H1 (cell line): ENCODE measurements at regions of chr10 and their contacts with region 1.

Region 1: GRCh38 chr10:29430101-29430500 is 141.2 kb downstream of the LYZL1 start:
- DNase-seq: no peak
- H3K4me3 ChIP-seq: no peak overlapping the region
- H3K27ac ChIP-seq: no peak overlapping the region
- H3K4me1 ChIP-seq: no peaks in the 10 kb centered on the region
- H3K27me3 ChIP-seq: no peaks in the 10 kb centered on the region
- CTCF ChIP-seq: no peak
- EP300 ChIP-seq: no peak
- POLR2A ChIP-seq: no peak
- RAD21 ChIP-seq: no peak

Region 2: DNA sequence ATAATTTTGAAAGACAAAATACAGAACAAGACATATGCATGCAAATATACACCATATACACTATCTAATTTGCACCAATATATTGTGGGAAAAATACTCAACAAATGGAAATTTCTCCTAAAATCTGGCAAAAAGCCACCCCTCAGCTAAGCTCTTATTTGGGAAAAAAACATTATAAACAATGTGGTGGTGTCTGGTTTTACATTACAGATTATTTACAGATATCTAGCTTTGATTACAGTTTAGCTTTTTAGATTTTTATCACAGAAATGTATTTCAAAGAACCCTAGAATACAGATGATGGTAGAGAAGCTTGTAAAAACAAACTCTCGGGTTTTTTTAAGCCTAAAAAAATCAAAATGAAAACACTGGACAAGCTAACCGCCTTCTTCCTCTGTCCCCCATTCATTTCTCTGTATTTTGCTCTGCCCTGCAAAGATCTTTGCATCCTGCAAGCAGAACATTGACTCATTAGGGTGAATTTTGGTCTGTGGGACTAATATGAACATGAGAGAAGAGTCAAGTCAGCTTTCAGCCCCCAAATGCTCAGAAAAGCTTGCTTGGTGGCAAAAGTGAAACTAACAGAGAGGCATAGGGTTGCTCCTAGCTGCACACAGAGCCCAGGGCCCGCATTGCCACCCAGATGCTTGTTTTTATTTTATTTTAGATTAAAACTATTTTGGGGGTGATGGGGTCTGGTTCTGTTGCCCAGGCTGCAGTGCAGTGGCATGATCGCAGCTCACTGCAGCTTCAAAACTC is 230.0 kb before region 1 on chr10:
- CTCF ChIA-PET with region 1: no interaction called
- POLR2A ChIA-PET with region 1: no interaction called
- DNase-seq: no peak
- H3K4me3 ChIP-seq: no peak overlapping the region
- H3K27ac ChIP-seq: no peak overlapping the region
- H3K4me1 ChIP-seq: peaks cover 3 to 9% (median 6%) of the 10 kb centered on the region in 4 experiments; a peak in 5 of 7 replicates
- H3K27me3 ChIP-seq: no peaks in the 10 kb centered on the region
- CTCF ChIP-seq: no peak
- EP300 ChIP-seq: no peak
- POLR2A ChIP-seq: no peak
- RAD21 ChIP-seq: no peak

Region 3: DNA sequence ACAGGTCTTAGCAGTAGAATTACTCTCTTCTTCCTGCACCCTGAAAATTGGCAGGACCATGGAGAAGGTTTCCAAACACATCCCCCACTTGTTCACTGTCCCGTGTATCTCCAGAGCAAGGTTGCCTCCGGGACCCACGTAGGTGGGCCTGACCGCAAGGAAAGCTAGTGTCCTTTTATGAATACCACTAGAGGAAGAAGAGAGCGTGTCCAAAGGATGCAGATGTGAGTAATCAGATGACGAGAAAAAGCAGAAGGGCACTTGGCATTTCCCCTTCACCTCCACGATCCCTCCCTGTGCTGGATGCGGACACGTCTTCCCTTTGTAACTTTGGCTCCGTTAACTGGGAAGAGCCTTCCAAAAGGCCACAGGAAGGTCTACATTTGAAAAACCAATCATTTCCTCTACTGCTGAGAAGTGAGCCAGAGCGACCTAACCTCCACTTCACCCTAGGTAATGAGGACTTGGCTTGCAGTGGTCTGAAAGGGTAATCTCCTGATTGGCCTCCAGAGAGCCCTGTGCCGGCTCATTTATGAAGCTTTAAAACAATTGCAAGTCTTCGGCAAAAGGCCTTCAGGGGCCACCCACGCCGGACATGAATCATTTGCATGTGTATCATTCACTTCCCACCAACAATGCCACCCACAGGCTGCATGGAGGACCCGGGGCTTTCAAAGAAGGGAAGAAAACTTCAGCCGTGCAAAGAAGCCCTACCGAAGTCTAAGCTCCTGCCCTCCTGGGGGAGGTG is 85.9 kb before region 1 on chr10:
- CTCF ChIA-PET with region 1: no interaction called
- POLR2A ChIA-PET with region 1: no interaction called
- DNase-seq: no peak
- H3K4me3 ChIP-seq: no peak overlapping the region
- H3K27ac ChIP-seq: no peak overlapping the region
- H3K4me1 ChIP-seq: no peaks in the 10 kb centered on the region; a peak in 1 of 7 replicates
- H3K27me3 ChIP-seq: no peaks in the 10 kb centered on the region
- CTCF ChIP-seq: no peak
- EP300 ChIP-seq: no peak
- POLR2A ChIP-seq: no peak
- RAD21 ChIP-seq: no peak

Region 4: GRCh38 chr10:29440981-29441380 is 10.9 kb after region 1 on chr10:
- CTCF ChIA-PET with region 1: interaction called, 11 read pairs
- POLR2A ChIA-PET with region 1: no interaction called
- DNase-seq: no peak
- H3K4me3 ChIP-seq: no peak overlapping the region
- H3K27ac ChIP-seq: no peak overlapping the region
- H3K4me1 ChIP-seq: peaks cover 0 to 4% (median 0%) of the 10 kb centered on the region in 4 experiments; a peak in 1 of 7 replicates
- H3K27me3 ChIP-seq: no peaks in the 10 kb centered on the region
- CTCF ChIP-seq: no peak
- EP300 ChIP-seq: no peak
- POLR2A ChIP-seq: no peak
- RAD21 ChIP-seq: no peak